HepG2 (cell line): ENCODE measurements at regions of chr9 and their contacts with region 1.

Region 1: DNA sequence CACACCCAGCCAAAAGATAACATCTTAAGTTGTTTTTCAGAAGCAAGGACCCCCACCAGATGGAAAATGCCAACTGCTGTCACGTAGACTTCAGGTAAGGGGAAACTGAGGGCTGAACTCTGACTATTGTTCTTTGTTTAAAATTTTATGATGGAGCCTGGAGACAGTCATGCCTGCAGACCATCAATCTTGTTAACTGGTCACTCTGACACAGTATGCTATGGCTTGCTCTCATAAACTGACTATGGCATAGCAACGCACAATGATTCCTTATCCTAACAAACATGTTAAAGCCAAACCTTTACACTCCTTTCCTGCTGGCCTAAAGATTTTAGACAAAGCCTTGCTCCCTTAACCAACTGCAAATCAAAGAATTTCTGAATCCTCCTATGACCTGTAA is 43.6 kb upstream of the GOLM1 start:
- DNase-seq: no peak
- ATAC-seq: no peak
- H3K4me3 ChIP-seq: no peak overlapping the region
- H3K27ac ChIP-seq: no peak overlapping the region
- H3K4me1 ChIP-seq: no peaks in the 10 kb centered on the region
- H3K27me3 ChIP-seq: peaks cover 0 to 8% of the 10 kb centered on the region in 2 experiments; a peak in 1 of 5 replicates
- CTCF ChIP-seq: no peak
- EP300 ChIP-seq: no peak
- POLR2A ChIP-seq: no peak
- RAD21 ChIP-seq: no peak

Region 2: GRCh38 chr9:85142968-85143367 is 1000.0 kb before region 1 on chr9:
- CTCF ChIA-PET with region 1: no interaction called
- POLR2A ChIA-PET with region 1: no interaction called
- in situ Hi-C with region 1: no loop called
- intact Hi-C with region 1: no loop called
- DNase-seq: peak; percentile 7
- ATAC-seq: peak; percentile 65
- H3K4me3 ChIP-seq: no peak overlapping the region
- H3K27ac ChIP-seq: no peak overlapping the region
- H3K4me1 ChIP-seq: no peaks in the 10 kb centered on the region
- H3K27me3 ChIP-seq: no peaks in the 10 kb centered on the region
- CTCF ChIP-seq: peak; percentile 46
- EP300 ChIP-seq: no peak
- POLR2A ChIP-seq: no peak
- RAD21 ChIP-seq: no peak

Region 3: DNA sequence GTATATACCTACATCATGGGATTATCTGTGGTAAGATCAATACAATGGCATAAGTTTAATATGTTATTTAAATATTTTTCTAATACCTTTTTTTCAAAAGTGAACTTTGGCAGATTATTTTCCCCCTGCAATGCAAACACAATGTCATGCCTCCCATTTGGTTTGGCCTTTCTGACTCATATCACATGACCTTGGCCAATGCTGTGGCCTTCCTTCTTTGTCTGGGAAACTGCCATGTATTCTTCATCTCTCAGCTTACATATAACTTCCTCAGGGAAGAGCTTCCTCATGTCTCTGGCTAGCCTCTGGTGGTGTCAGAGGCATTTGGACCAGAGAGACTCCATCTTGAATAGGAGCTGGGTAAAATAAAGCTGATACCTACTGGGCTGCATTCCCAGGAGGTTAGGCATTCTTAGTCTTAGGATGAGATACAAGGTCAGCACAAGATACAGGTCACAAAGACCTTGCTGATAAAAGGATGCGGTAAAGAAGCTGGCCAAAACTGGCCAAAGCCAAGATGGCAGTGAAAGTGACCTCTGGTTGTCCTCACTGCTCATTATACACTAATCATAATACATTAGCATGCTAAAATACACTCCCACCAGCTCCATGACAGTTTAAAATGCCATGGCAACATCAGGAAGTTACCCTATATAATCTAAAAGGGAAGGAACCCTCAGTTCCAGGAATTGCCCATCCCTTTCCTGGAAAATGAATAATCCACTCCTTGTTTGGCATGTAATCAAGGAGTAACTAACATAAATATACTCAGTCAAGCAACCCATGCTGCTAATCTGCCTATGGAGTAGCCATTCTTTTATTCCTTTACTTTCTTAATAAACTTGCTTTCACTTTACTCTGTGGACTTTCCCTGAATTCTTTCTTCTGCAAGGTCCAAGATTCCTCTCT is 40.5 kb after region 1 on chr9:
- CTCF ChIA-PET with region 1: no interaction called
- POLR2A ChIA-PET with region 1: no interaction called
- in situ Hi-C with region 1: no loop called
- intact Hi-C with region 1: loop called (anchors 1 kb)
- DNase-seq: peak; percentile 10
- ATAC-seq: no peak
- H3K4me3 ChIP-seq: no peak overlapping the region
- H3K27ac ChIP-seq: no peak overlapping the region
- H3K4me1 ChIP-seq: 0 out of 2 replicates have a peak, but pooled peaks cover 4% of the 10 kb centered on the region
- H3K27me3 ChIP-seq: peaks cover 0 to 10% of the 10 kb centered on the region in 2 experiments; a peak in 1 of 5 replicates
- CTCF ChIP-seq: no peak
- EP300 ChIP-seq: no peak
- POLR2A ChIP-seq: no peak
- RAD21 ChIP-seq: no peak

Region 4: DNA sequence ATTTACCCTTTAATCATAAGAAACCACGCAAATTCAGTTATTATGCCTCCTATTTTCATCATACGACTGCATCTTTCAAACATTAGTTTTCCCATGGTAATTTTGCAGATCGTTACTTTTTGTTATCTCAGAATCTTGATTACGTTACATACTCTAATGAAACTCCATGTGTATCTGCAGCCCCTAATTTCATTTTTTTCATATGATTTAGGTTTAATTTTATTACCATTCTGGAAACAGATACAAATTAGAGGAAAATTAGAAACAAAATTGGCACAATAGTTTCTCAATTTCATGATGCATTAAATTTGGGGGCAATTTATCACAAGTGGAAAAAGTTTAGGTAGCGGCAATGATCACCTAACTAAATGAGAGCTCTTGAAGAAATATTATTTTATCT is 64.2 kb after region 1 on chr9:
- CTCF ChIA-PET with region 1: no interaction called
- POLR2A ChIA-PET with region 1: no interaction called
- in situ Hi-C with region 1: no loop called
- intact Hi-C with region 1: no loop called
- DNase-seq: no peak
- ATAC-seq: no peak
- H3K4me3 ChIP-seq: no peak overlapping the region
- H3K27ac ChIP-seq: no peak overlapping the region
- H3K4me1 ChIP-seq: no peaks in the 10 kb centered on the region
- H3K27me3 ChIP-seq: peaks cover 0 to 3% of the 10 kb centered on the region in 2 experiments; a peak in 1 of 5 replicates
- CTCF ChIP-seq: no peak
- EP300 ChIP-seq: no peak
- POLR2A ChIP-seq: no peak
- RAD21 ChIP-seq: no peak